Right ventricle myocardium inferior (tissue), 1 donor: ENCODE measurements at regions of chr3 and their contacts with region 1.

Region 1: GRCh38 chr3:196609343-196609775 is 30.1 kb upstream of the NRROS start:
- DNase-seq: peak; percentile 95
- ATAC-seq: peak; percentile 85

Region 2: GRCh38 chr3:196047391-196048030 is 561.8 kb before region 1 on chr3:
- intact Hi-C with region 1: no loop called
- DNase-seq: no peak
- ATAC-seq: no peak

Region 3: GRCh38 chr3:196632046-196632751 is 22.8 kb after region 1 on chr3:
- intact Hi-C with region 1: loop called (anchors 2 kb)
- DNase-seq: peak; percentile 96
- ATAC-seq: peak; percentile 89

Region 4: DNA sequence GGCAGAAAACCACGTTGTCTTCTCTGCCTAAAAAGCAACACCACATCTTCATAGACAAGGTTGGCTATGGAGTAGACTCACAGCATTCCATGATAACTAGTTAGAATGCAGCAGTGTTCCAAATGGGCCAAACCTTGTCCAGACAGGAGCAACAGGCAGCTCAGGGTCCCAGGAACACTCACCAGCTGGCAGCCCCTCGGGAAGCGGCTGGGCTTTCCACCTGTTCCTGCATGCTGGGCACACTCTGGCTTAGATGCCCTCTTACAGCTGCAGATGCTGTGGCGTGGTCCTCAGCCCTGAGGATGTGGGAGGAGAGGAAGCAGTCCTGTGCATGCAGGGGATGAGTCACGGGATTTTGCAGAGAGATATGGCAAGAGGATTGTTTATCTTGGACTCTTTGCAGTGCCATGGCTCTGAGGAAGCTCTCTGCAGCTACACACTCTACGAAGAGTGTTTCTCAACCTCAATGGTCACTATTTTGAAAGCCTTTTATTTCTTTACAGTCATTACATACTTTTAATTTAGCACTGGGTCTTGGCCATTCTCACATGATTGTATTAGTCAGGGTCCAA is 41.5 kb after region 1 on chr3:
- intact Hi-C with region 1: no loop called
- DNase-seq: no peak
- ATAC-seq: peak; percentile 90

Region 5: GRCh38 chr3:196684548-196685407 is 75.4 kb after region 1 on chr3:
- intact Hi-C with region 1: loop called (anchors 1 kb)
- DNase-seq: no peak
- ATAC-seq: peak; percentile 67